ENCODE measurements at regions of chr19 and their contacts with region 1.

Region 1: DNA sequence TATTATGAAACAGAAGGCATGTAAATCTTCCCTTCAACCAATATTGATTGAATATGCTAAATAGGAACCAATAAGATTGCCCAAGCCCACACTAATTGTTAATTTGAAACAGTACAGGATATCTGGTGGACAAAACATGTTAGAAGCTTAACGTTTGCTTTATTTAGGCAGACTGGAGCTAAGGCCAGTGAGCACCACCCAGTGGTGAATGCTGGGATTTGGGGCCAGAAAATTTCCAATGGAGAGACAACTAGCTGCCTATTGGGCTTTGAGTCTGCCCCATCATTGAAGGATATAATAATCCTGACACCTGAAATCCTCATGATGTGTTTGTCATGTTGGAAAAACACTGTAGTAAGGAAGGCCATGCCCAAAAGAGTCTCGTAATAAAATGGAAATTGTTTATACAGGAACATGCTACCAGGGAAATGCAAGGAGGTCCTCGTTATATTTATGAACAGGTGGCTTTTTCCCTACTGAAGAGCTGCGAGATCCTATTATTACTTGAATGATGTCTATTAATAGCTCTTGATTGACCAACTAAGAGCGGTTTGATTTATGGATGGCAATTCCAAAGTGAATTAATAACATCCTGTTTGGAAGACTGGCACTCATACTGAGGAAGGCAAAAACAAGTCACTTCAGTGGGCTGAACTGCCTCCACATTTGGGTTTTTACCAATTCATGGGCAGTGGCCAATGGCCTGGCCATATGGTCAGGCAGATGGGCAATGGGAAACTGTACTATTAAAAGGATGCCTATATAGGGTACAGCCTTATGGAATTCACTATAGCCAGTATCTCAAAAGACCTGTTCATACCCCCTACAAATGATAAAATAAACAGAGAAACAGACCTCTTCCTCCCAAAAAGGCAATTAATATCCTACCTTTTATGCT is 8.7 kb downstream of the SIGLECL1 start:
- DNase-seq: peak; percentile 78
- H3K4me3 Mint-ChIP-seq: no peak overlapping the region
- H3K27ac Mint-ChIP-seq: peak overlapping the region; percentile 22
- H3K4me1 Mint-ChIP-seq: peaks cover 49% of the 10 kb centered on the region
- H3K27me3 Mint-ChIP-seq: peaks cover 29% of the 10 kb centered on the region

Region 2: DNA sequence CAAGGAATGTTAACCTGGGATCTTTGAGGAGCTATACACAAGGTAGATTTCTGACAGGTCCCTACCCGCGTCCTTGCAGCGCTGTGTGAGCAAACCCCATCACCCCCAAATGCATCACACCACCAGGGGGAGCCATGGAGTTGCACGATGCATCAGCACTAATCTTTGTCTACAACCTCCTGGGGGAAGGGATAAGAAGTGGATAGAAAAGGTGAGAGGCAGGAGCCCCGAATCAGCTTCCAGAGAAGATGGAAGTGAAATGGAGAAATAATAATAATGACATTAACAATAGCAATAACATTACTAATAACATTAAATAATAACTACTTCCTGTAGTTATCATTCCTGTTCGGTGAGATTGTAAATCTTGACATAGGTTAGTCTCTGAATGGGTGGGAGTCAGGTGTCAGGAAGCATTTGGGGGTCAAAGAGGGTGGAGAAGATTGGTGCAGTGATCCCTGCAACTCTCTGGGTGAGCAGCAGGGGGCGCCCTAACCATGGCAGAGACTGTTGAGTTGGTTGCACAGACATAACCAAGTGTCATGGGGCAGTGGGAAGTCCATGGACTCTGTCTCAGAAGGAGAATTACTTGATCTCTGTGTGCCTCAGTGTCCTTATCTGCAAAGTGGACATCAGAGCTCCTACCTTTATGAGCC is 101.0 kb before region 1 on chr19:
- CTCF ChIA-PET with region 1: interaction called, 180 read pairs
- POLR2A ChIA-PET with region 1: interaction called, 8 read pairs
- DNase-seq: peak; percentile 88
- H3K4me3 Mint-ChIP-seq: no peak overlapping the region
- H3K27ac Mint-ChIP-seq: peak overlapping the region; percentile 56
- H3K4me1 Mint-ChIP-seq: peaks cover 38% of the 10 kb centered on the region
- H3K27me3 Mint-ChIP-seq: peaks cover 20% of the 10 kb centered on the region

Region 3: DNA sequence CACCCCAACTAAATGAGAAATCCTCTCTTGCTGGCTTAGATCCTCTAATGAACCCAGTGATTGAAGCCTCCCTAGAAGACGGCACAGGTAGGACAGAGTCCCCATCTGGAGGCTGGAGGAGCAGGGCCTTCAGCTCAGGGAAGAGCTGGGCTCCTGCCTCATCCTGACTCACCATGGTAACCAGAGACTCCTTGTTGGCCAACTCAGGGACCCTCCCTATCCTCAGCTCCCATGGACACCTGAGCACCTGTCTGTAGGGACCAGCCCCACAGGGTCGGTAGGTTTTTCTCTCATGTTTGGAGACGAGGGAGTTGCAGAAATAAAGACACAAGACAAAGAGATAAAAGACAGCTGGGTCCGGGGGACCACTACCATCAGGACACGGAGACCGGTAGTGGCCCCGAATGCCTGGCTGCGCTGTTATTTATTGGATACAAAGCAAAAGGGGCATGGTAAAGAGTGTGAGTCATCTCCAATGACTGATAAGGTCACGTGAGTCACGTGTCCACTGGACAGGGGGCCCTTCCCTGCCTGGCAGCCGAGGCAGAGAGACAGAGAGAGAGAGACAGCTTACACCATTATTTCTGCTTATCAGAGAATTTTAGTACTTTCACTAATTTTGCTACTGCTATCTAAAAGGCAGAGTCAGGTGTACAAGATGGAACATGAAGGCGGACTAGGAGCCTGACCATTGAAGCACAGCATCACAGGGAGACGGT is 90.9 kb before region 1 on chr19:
- CTCF ChIA-PET with region 1: interaction called, 26 read pairs
- POLR2A ChIA-PET with region 1: no interaction called
- DNase-seq: no peak
- H3K4me3 Mint-ChIP-seq: peak overlapping the region; percentile 80
- H3K27ac Mint-ChIP-seq: no peak overlapping the region
- H3K4me1 Mint-ChIP-seq: peaks cover 54% of the 10 kb centered on the region
- H3K27me3 Mint-ChIP-seq: peaks cover 20% of the 10 kb centered on the region

Region 4: DNA sequence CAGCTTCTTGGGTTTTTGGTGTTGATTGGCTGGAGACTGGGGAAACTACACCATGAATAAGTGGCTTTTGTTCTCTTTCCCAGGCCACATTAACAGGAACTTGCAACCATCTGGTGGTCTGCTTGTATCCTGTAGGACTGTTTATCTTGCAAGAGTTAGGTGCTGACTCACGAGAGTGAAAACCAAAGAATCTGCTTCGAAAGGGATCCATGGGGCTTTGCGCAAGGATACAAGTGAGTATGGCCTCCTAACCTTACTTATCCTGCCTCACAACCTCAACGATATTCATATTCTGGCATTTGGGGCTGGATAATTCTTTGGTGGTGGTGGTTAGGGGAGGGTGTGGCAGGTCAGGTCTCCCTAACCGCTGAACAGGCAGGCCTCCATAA is 13.4 kb before region 1 on chr19:
- CTCF ChIA-PET with region 1: interaction called, 21 read pairs
- POLR2A ChIA-PET with region 1: interaction called, 16 read pairs
- DNase-seq: peak; percentile 37
- H3K4me3 Mint-ChIP-seq: peak overlapping the region; percentile 66
- H3K27ac Mint-ChIP-seq: peak overlapping the region; percentile 90
- H3K4me1 Mint-ChIP-seq: peaks cover 77% of the 10 kb centered on the region
- H3K27me3 Mint-ChIP-seq: peaks cover 7% of the 10 kb centered on the region

Region 5: GRCh38 chr19:51272183-51272810 is 12.7 kb after region 1 on chr19:
- CTCF ChIA-PET with region 1: interaction called, 40 read pairs
- POLR2A ChIA-PET with region 1: interaction called, 19 read pairs
- DNase-seq: peak; percentile 79
- H3K4me3 Mint-ChIP-seq: peak overlapping the region; percentile 62
- H3K27ac Mint-ChIP-seq: peak overlapping the region; percentile 97
- H3K4me1 Mint-ChIP-seq: peaks cover 46% of the 10 kb centered on the region
- H3K27me3 Mint-ChIP-seq: peaks cover 5% of the 10 kb centered on the region

Measured in activated CD4-positive, alpha-beta memory T cell treated with anti-CD3 and anti-CD28 coated beads, Interleukin-2, amount 10 ng/mL, durations not matched to agents 7 days and 5 days (primary cell).